ENCODE measurements at regions of chr9 and their contacts with region 1.

Region 1: DNA sequence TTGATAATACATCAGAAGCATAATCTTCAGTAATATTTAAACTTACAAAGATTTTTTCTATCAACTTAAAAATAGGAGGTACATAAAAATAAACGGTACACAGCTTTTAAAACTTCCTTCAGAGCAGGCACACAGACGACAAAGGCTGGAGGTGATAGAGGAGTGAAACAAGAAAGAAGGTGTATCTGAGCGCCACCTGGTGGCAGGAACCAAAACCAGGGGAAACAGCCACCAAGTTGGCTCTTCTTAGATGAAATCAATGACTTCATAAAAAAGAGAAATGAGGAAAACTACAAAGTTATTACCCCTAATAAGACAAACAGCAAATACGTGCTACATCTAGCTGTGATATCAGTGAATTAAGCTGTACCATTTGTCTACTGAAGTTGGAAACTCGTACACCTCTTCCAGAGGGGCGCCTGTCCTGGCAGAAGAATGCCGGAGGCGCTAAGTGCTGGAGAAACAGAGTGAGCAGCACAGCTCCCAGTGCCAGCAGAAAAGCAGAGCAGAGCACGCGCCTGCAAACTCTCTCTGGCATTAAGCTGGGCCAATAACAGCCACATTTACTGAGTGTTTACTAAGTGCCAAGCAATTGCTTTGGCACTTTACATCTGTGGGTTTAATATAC is 85.9 kb downstream of the SETX start:
- DNase-seq: peak; percentile 77
- ATAC-seq: peak; percentile 77
- H3K4me3 Mint-ChIP-seq: no peak overlapping the region
- H3K27ac Mint-ChIP-seq: peak overlapping the region; percentile 64
- H3K4me1 Mint-ChIP-seq: peaks cover 11% of the 10 kb centered on the region
- H3K27me3 Mint-ChIP-seq: no peaks in the 10 kb centered on the region

Region 2: GRCh38 chr9:131755541-131756198 is 513.2 kb before region 1 on chr9:
- CTCF ChIA-PET with region 1: interaction called, 10 read pairs
- DNase-seq: peak; percentile 91
- ATAC-seq: peak; percentile 97
- H3K4me3 Mint-ChIP-seq: no peak overlapping the region
- H3K27ac Mint-ChIP-seq: no peak overlapping the region
- H3K4me1 Mint-ChIP-seq: peaks cover 17% of the 10 kb centered on the region
- H3K27me3 Mint-ChIP-seq: peaks cover 14% of the 10 kb centered on the region

Region 3: DNA sequence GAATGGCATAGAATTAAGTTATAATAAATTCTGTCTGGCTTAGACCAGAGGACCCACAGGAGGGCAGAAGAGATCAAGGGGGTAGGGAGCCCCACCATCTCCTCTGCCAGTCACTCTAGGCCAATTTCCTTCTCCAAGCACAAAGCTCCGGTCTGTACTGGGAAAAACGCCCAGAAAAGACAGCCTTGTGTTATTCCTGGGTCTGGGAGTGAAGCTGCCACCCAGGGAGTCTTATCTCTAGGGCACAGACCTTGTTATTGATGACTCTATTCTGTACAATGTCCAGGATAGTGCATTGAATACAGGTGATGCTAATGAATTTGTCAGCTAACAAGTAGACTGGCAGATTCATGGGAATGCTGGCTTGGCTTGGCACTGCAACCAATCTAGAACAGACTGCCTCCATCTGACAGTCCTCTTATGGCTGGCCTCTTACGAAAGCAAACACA is 249.9 kb before region 1 on chr9:
- CTCF ChIA-PET with region 1: no interaction called
- DNase-seq: no peak
- ATAC-seq: no peak
- H3K4me3 Mint-ChIP-seq: no peak overlapping the region
- H3K27ac Mint-ChIP-seq: no peak overlapping the region
- H3K4me1 Mint-ChIP-seq: no peaks in the 10 kb centered on the region
- H3K27me3 Mint-ChIP-seq: no peaks in the 10 kb centered on the region

Region 4: DNA sequence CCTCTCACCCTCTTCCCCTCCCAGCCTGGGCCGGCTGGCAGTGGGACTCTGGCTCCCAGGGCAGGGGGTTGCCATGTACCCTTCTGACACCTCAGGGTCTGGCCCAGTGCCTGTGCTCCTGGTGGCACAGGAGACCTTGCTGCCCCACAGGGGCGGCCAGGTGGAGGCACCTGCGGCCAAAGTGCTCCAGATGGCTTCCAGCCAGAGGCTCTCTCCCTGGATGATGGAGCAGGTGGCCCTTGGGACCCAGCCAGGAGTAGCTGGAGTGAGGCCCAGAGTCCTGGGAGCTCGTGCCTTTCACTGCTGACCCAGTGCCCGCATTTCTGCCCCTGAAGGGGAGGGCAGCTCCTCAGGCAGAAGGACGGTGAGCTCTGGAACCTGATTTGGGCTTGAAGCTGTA is 19.7 kb before region 1 on chr9:
- CTCF ChIA-PET with region 1: interaction called, 15 read pairs
- DNase-seq: no peak
- ATAC-seq: no peak
- H3K4me3 Mint-ChIP-seq: no peak overlapping the region
- H3K27ac Mint-ChIP-seq: no peak overlapping the region
- H3K4me1 Mint-ChIP-seq: peaks cover 5% of the 10 kb centered on the region
- H3K27me3 Mint-ChIP-seq: peaks cover 32% of the 10 kb centered on the region

Region 5: GRCh38 chr9:132283863-132284262 is 15.0 kb after region 1 on chr9:
- CTCF ChIA-PET with region 1: interaction called, 11 read pairs
- DNase-seq: no peak
- ATAC-seq: no peak
- H3K4me3 Mint-ChIP-seq: no peak overlapping the region
- H3K27ac Mint-ChIP-seq: no peak overlapping the region
- H3K4me1 Mint-ChIP-seq: peaks cover 10% of the 10 kb centered on the region
- H3K27me3 Mint-ChIP-seq: no peaks in the 10 kb centered on the region

Region 6: GRCh38 chr9:132531187-132531586 is 262.3 kb after region 1 on chr9:
- CTCF ChIA-PET with region 1: no interaction called
- DNase-seq: no peak
- ATAC-seq: no peak
- H3K4me3 Mint-ChIP-seq: no peak overlapping the region
- H3K27ac Mint-ChIP-seq: no peak overlapping the region
- H3K4me1 Mint-ChIP-seq: peaks cover 5% of the 10 kb centered on the region
- H3K27me3 Mint-ChIP-seq: peaks cover 20% of the 10 kb centered on the region

Measured in activated CD8-positive, alpha-beta memory T cell treated with anti-CD3 and anti-CD28 coated beads, Interleukin-2, amount 10 ng/mL, durations not matched to agents 7 days and 5 days (primary cell).